H1 (cell line): ENCODE measurements at regions of chr2 and their contacts with region 1.

Region 1: GRCh38 chr2:105791229-105791628 is 46.5 kb downstream of the NCK2 start:
- DNase-seq: no peak
- H3K4me3 ChIP-seq: no peak overlapping the region
- H3K27ac ChIP-seq: no peak overlapping the region
- H3K4me1 ChIP-seq: peaks cover 3 to 15% (median 5%) of the 10 kb centered on the region in 4 experiments; a peak in 6 of 7 replicates
- H3K27me3 ChIP-seq: no peaks in the 10 kb centered on the region
- CTCF ChIP-seq: no peak
- EP300 ChIP-seq: no peak
- POLR2A ChIP-seq: no peak
- RAD21 ChIP-seq: no peak

Region 2: DNA sequence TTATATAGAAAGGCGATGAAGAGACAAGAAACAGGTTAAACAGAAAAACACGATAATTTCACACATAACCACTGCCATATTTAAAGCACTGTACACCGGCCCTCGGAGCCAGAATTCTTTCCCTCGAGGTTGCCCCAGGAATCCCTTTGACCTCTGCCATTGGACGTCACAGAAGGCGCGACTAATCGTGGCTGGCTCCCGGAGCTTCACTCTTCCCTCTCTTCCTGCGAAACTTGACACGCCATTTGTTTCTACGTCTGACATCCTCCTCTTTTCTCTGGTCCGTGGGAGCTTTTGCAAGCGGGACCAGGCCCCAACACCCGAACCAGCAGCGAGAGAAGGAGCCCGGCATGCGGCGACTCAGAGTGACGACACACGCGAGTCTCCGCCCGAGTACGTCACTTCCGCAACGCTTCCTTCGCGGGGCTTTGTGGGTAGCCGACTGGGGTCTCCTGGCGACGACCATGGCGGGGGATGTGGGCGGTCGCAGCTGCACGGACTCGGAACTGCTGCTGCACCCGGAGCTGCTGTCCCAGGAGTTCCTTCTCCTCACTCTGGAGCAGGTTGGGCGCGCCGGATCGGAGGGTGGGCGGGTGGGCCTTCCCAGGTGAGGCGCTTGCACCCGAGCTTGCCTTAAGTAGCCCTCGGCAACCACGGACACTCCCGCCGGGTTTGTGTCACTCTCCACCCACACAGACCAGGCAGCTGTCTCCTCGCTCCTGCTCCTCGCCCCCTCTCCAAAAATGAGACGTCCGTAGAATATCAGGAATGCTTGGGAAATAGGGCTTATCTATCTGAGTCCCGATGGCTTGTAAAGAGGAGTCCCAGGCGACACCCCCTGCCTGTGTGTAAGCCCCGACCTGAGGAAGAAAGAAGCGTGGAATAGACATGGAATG is 453.9 kb before region 1 on chr2 and contains the start of gene C2orf49:
- CTCF ChIA-PET with region 1: no interaction called
- POLR2A ChIA-PET with region 1: no interaction called
- DNase-seq: peak; percentile 41 to 95
- H3K4me3 ChIP-seq: peak within 1 kb of the TSS; percentile 82 to 99 (median 96)
- H3K27ac ChIP-seq: peak within 1 kb of the TSS; percentile 100
- H3K4me1 ChIP-seq: peaks cover 0 to 5% (median 0%) of the 10 kb centered on the region in 4 experiments; a peak in 2 of 7 replicates
- H3K27me3 ChIP-seq: no peaks in the 10 kb centered on the region
- CTCF ChIP-seq: no peak
- EP300 ChIP-seq: no peak
- POLR2A ChIP-seq: peak; percentile 73 to 93
- RAD21 ChIP-seq: no peak
- total RNA-seq, gene C2orf49: 14.4 and 19.9 TPM in 2 replicates

Region 3: GRCh38 chr2:105775809-105776559 is 15.2 kb before region 1 on chr2:
- CTCF ChIA-PET with region 1: interaction called, 12 read pairs
- POLR2A ChIA-PET with region 1: interaction called, 6 read pairs
- DNase-seq: no peak
- H3K4me3 ChIP-seq: no peak overlapping the region
- H3K27ac ChIP-seq: no peak overlapping the region
- H3K4me1 ChIP-seq: peaks cover 4 to 31% (median 10%) of the 10 kb centered on the region in 4 experiments
- H3K27me3 ChIP-seq: no peaks in the 10 kb centered on the region
- CTCF ChIP-seq: no peak
- EP300 ChIP-seq: no peak
- POLR2A ChIP-seq: no peak
- RAD21 ChIP-seq: no peak